ENCODE measurements at regions of chr20 and their contacts with region 1.

Region 1: GRCh38 chr20:50070991-50071888 is 41.7 kb downstream of the UBE2V1 start:
- DNase-seq: peak; percentile 91
- H3K4me3 Mint-ChIP-seq: peak overlapping the region; percentile 33
- H3K27ac Mint-ChIP-seq: no peak overlapping the region
- H3K4me1 Mint-ChIP-seq: peaks cover 4% of the 10 kb centered on the region
- H3K27me3 Mint-ChIP-seq: peaks cover 2% of the 10 kb centered on the region

Region 2: GRCh38 chr20:49964964-49965780 is 106.1 kb before region 1 on chr20:
- CTCF ChIA-PET with region 1: interaction called, 11 read pairs
- POLR2A ChIA-PET with region 1: no interaction called
- DNase-seq: peak; percentile 39
- H3K4me3 Mint-ChIP-seq: no peak overlapping the region
- H3K27ac Mint-ChIP-seq: no peak overlapping the region
- H3K4me1 Mint-ChIP-seq: no peaks in the 10 kb centered on the region
- H3K27me3 Mint-ChIP-seq: no peaks in the 10 kb centered on the region

Region 3: GRCh38 chr20:49989234-49990065 is 81.8 kb before region 1 on chr20:
- CTCF ChIA-PET with region 1: interaction called, 300 read pairs
- POLR2A ChIA-PET with region 1: no interaction called
- DNase-seq: no peak
- H3K4me3 Mint-ChIP-seq: no peak overlapping the region
- H3K27ac Mint-ChIP-seq: no peak overlapping the region
- H3K4me1 Mint-ChIP-seq: no peaks in the 10 kb centered on the region
- H3K27me3 Mint-ChIP-seq: peaks cover 5% of the 10 kb centered on the region

Region 4: DNA sequence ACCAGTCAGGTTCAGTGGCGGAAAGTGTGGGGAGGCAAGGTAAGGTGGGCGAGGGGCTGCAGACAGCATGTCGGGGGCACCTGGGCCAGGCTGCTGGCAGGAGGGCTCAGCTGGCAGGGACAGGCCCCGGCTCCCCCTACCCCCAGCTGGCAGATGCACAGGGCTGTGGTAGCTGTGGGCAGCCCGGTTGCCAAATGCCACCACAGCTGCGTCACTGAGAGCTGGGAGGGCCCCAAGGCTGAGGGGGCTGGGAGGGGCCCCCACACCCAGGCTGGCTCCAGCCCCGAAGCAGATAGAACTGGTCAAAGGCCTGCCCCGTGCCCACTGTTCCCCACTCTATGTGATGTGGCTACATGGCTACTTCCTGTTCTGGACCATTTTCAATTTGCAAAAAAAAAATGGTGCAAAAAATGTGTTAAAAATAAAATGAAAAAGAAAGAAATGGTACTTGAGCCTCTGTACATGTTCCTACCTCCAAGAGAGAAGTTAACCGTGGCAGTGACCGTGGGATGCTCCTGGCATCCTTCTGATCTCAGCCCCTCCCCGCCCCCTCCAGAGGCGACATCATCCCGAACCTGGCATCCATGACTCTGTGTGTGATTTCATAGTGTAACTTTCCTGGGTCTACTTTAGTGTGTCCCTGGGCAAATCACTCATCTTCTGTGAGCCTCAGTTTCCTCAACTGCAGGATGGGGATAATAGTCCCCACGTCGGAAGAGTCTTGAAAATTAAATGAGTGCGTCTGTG is 22.6 kb before region 1 on chr20:
- CTCF ChIA-PET with region 1: interaction called, 11 read pairs
- POLR2A ChIA-PET with region 1: no interaction called
- DNase-seq: peak; percentile 20
- H3K4me3 Mint-ChIP-seq: no peak overlapping the region
- H3K27ac Mint-ChIP-seq: no peak overlapping the region
- H3K4me1 Mint-ChIP-seq: peaks cover 13% of the 10 kb centered on the region
- H3K27me3 Mint-ChIP-seq: peaks cover 19% of the 10 kb centered on the region

Region 5: GRCh38 chr20:50101281-50101680 is 30.0 kb after region 1 on chr20:
- CTCF ChIA-PET with region 1: interaction called, 12 read pairs
- POLR2A ChIA-PET with region 1: interaction called, 3 read pairs
- DNase-seq: no peak
- H3K4me3 Mint-ChIP-seq: no peak overlapping the region
- H3K27ac Mint-ChIP-seq: no peak overlapping the region
- H3K4me1 Mint-ChIP-seq: peaks cover 44% of the 10 kb centered on the region
- H3K27me3 Mint-ChIP-seq: no peaks in the 10 kb centered on the region

Region 6: GRCh38 chr20:50153485-50154377 is 82.5 kb after region 1 on chr20 and contains the start of gene PEDS1:
- CTCF ChIA-PET with region 1: interaction called, 21 read pairs
- POLR2A ChIA-PET with region 1: interaction called, 3 read pairs
- DNase-seq: peak; percentile 88
- H3K4me3 Mint-ChIP-seq: peak within 1 kb of the TSS; percentile 81
- H3K27ac Mint-ChIP-seq: peak within 1 kb of the TSS; percentile 78
- H3K4me1 Mint-ChIP-seq: peaks cover 48% of the 10 kb centered on the region
- H3K27me3 Mint-ChIP-seq: no peaks in the 10 kb centered on the region
- total RNA-seq, gene PEDS1: 30.3 to 32.3 TPM

Region 7: GRCh38 chr20:50200482-50201104 is 129.4 kb after region 1 on chr20:
- CTCF ChIA-PET with region 1: no interaction called
- POLR2A ChIA-PET with region 1: no interaction called
- DNase-seq: no peak
- H3K4me3 Mint-ChIP-seq: no peak overlapping the region
- H3K27ac Mint-ChIP-seq: no peak overlapping the region
- H3K4me1 Mint-ChIP-seq: peaks cover 5% of the 10 kb centered on the region
- H3K27me3 Mint-ChIP-seq: peaks cover 9% of the 10 kb centered on the region